GM10248 (cell line): ENCODE measurements at regions of chr14 and their contacts with region 1.

Region 1: DNA sequence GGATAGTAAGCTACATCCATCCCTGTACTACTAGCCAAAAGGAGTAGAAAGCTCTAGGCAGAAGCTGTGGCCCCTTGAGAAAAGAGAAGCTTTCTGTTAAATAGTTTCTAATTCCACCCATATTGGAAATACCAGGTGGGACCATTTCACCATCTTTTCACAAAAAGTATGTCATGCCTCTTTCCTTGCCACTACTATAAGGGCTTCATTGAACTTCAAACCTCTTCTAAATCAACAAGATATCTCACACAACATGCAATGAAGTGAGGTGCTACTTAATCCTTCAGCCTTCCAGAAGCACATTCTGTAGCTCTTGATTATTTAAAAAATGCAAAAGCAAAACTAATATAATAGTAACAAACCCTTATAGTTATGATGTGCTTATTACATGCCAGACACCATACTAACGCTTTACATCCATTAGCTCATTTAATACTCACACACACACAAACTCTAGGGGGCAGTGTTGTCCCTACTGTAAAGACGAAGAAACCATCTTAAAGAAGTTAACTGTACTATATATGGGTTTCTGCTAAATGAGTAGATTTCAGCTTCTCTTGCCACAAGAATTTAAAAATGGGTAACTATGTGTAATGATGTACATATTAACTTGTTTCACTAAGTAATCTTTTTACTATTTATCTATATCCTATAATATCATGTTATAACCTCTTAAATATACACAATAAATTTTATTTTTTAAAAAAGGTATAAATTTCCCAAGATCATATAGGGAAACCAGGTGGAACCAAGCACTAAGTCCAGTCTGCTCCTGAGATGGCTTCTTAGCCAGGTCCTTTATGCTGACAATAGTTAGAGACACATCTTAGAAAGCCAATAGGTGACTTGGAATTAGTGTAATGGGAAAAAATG is 124.4 kb downstream of the RPS29 start:
- DNase-seq: peak; percentile 33
- CTCF ChIP-seq: peak; percentile 55

Region 2: GRCh38 chr14:49438256-49438770 is 23.5 kb before region 1 on chr14:
- CTCF ChIA-PET with region 1: interaction called, 22 read pairs
- POLR2A ChIA-PET with region 1: no interaction called
- DNase-seq: no peak
- CTCF ChIP-seq: no peak

Region 3: GRCh38 chr14:49447540-49448107 is 14.1 kb before region 1 on chr14:
- CTCF ChIA-PET with region 1: interaction called, 20 read pairs
- POLR2A ChIA-PET with region 1: no interaction called
- DNase-seq: no peak
- CTCF ChIP-seq: no peak

Region 4: GRCh38 chr14:49483268-49483667 is 21.5 kb after region 1 on chr14:
- CTCF ChIA-PET with region 1: interaction called, 21 read pairs
- POLR2A ChIA-PET with region 1: no interaction called
- DNase-seq: no peak
- CTCF ChIP-seq: no peak

Region 5: DNA sequence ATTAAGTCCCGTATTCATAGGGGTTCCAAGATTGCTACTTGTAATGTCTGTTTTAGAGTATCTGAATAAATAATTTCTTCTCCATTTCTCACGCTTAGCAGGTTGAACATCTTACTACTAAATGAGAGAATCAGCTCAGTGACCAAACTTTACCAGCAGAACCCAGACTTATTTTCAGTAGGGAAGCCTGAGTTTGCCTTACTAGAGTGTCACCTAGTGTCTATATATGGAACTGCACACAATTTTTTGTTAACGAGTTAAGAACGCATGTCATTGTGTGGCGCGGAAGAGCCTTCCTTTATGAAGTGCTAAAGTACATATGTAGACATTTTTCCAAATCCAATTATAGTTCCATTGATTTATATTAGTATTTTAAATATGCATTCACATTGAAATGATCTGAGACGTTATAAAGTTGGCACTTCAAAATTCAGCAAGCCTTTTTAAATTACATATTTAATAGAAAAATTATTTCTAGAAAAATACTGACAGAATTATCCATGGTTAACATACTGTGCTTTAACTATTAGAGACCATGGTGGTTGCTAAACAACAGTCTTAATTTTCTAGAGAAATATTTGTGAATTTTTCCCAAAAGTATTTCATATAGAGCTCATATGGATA is 36.1 kb after region 1 on chr14:
- CTCF ChIA-PET with region 1: interaction called, 91 read pairs
- POLR2A ChIA-PET with region 1: no interaction called
- DNase-seq: peak; percentile 59
- CTCF ChIP-seq: peak; percentile 73